ENCODE measurements at regions of chr2 and their contacts with region 1.

Region 1: DNA sequence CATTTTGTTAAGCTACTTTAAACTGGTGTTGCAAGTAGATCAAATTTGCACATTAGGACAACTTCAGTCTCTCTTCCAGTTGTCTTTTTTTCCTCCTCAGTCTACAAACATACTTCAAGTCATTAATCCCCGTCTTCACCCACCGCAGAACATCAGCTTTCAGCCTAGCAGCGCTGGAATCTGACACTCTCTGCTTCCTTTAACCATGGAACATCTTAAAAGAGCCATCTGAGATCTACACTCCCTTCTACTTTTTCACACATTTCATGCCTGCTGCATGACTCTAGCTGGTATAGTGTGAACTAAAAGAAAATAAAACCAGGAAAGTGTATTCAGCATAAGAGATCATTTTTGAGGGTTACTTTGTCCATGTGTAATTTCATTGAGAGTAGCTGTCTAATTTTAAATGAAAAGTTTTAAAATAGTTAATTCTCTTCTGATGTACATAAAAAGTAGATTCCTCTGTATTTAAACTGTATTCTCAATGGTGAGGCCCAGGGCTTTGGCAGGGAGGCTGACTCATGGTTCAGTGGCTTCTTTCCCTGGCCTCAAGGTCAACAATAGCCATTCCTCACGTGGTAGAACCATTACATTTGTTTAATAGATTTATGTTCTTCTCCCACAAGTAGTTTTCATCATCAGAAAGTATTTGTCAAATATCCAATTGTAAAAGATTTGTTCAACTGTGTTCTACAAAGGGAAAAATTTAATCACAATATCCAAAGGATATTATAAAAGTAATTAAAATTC is 16.5 kb downstream of the SGPP2 start:
- DNase-seq: no peak
- H3K4me3 ChIP-seq: no peak overlapping the region
- H3K27ac ChIP-seq: no peak overlapping the region
- H3K4me1 ChIP-seq: no peaks in the 10 kb centered on the region
- H3K27me3 ChIP-seq: no peaks in the 10 kb centered on the region
- CTCF ChIP-seq: no peak

Region 2: DNA sequence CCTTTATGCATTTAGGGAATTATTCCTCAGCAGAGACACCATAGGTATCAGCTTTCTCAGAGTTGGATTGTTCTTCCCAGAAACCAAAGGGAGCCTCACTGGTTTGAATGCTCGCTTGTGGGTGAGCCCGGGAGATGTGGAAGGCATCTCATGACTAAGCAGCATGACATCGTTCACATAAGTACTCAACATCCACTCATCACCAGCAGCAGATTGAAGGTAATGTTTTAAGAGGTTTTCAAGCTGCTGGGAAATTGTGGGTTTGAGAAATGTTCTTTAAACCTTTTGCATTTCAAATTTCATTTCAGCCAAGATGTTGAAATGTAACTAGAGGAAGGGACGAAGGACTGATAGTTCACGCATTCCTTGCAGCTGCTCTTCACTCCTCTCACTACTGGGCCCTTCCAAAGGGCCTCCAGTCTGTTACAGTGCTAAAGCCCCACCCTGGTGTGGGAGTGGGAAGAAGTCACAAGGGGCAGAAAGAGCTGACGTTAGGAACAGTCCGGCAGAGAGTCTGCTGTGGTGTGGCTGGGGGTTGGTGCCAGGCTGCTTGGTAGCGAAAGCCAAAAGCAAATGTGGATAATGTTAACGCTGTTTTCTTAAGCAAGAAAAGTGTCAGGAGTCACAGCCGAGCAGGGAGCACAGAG is 544.2 kb before region 1 on chr2:
- intact Hi-C with region 1: loop called (anchors 5 kb)
- DNase-seq: peak; percentile 22 to 75
- H3K4me3 ChIP-seq: no peak overlapping the region
- H3K27ac ChIP-seq: peak overlapping the region; percentile 36 to 48
- H3K4me1 ChIP-seq: peaks cover 0 to 17% (median 0%) of the 10 kb centered on the region in 4 donors
- H3K27me3 ChIP-seq: no peaks in the 10 kb centered on the region
- CTCF ChIP-seq: no peak

Region 3: DNA sequence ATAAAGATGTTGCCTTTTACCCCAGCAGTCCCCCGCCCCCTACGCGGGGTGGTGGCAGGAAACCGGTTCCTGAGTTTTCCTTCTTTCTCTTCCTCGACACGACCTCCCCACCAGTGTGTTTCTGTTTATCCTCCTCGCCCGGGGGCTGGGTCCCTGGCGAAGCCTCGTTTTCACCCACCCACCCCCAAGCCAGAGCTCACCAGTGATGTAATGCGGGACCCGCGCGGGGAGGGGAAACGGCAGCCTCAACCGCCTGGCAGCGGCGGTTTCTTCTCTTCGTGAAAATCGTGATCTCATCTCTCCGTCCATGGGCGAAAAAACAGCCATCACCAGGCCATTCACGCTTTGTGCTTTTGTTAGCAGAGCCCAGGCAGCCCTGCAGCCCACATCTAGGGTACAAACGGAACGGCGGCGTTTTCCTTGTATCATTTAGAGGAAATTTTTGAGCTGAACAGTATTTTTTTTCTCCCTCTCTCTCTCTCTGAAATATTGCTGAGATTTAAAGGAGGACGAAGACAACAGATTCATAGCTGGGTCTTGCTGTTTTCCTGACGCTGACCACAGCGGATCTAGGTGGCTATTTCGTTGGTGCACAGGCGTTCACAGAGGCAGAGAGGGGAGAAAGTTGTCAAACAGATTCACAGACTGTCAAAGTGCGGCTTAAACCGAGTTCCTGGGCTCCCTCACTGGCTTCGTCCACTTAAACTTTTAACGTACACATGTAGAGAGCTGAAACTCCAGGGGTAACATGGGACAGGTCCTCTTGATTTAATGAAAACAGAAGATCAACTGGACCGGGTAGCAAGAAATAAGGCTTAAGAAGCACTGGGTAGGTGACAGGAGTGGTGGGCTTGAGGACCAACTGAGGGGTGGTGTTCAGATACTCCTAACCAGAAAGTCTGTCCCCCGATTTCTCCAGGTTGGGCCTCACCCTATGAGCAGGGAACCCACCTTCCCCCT is 120.1 kb before region 1 on chr2:
- intact Hi-C with region 1: no loop called
- DNase-seq: no peak
- H3K4me3 ChIP-seq: peak overlapping the region; percentile 33 to 52
- H3K27ac ChIP-seq: no peak overlapping the region
- H3K4me1 ChIP-seq: peaks cover 0 to 24% (median 17%) of the 10 kb centered on the region in 4 donors
- H3K27me3 ChIP-seq: peaks cover 0 to 53% of the 10 kb centered on the region in 2 donors
- CTCF ChIP-seq: no peak

Region 4: DNA sequence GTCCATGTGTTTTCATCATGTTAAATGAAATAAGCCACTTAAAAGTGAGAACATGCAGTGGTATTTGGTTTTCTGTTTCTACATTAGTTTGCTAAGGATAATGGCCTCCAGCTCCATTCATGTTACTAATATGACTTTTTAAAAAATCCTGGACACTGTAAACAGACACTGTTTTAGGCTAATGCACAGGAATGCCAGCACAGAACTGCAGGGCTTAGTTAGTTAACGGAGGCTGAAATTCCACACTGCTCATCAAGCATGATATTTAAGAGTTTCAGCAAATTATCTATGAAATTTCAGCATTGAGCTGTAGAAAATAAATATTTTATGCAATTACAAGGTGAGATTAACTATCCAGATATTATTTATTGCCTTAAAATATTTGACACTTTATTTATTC is 99.5 kb before region 1 on chr2:
- intact Hi-C with region 1: no loop called
- DNase-seq: no peak
- H3K4me3 ChIP-seq: no peak overlapping the region
- H3K27ac ChIP-seq: no peak overlapping the region
- H3K4me1 ChIP-seq: no peaks in the 10 kb centered on the region
- H3K27me3 ChIP-seq: no peaks in the 10 kb centered on the region
- CTCF ChIP-seq: no peak